Cardiac septum (tissue), 1 donor: ENCODE measurements at regions of chrX and their contacts with region 1.

Region 1: GRCh38 chrX:13029341-13029740 is 15.1 kb downstream of the FAM9C start:
- DNase-seq: no peak

Region 2: GRCh38 chrX:12984629-12985319 is 44.6 kb before region 1 on chrX:
- intact Hi-C with region 1: loop called (anchors 5 kb)
- DNase-seq: no peak